ENCODE measurements at regions of chr6 and their contacts with region 1.

Region 1: GRCh38 chr6:87929843-87930288 is 117.8 kb upstream of the SPACA1 start:
- DNase-seq: peak; percentile 92

Region 2: DNA sequence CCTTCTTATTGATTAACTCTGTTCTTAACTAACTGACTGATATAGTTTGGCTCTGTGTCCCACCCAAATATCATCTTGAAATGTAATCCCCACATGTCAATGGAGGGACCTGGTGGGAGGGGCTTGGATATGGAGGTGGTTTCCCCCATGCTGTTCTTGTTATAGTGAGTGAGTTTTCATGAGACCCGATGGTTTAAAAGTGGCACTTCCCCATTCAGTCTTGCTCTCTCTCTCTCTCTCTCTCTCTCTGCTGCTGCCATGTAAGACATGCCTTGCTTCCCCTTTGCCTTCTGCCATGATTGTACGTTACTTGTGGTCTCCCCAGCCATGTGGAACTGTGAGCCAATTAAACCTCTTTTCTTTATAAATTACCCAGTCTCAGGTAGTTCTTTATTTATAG is 35.9 kb after region 1 on chr6:
- intact Hi-C with region 1: no loop called
- DNase-seq: no peak

Region 3: DNA sequence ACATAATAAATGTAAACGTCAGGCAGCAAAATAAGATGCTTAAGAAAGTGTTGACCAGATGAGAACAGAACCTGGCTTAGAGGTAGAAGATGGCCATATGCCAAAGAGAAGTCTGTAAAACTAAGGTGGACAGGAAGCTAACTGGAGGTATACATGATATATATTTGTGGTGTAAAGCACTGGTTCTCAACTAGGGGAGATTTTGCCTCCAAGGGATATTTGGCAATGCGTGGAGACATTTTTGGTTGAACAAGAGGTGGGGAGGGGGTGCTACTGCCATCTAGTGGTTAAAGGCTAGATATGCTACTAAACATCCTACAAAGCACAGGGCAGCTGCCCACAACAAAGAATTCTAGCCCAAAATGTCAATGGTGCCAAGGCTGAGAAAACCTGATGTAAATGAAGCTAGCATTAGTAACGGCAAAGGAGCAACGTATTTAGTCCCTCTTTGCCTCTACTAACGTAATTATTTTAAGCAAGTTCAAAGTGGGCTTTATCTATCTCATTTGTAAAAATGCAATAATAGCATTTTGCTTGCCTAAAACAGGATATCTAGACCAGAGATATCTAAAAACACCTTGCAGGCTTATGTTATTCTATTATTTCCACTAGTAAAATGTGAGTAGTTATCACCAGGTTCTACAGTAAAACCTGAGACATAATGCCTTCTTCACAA is 851.0 kb after region 1 on chr6:
- intact Hi-C with region 1: loop called in 1 of 2 experiments (anchors 5 kb)
- DNase-seq: no peak

Region 4: GRCh38 chr6:88870717-88871330 is 941.0 kb after region 1 on chr6:
- intact Hi-C with region 1: loop called in 1 of 2 experiments (anchors 5 kb)
- DNase-seq: no peak

Region 5: GRCh38 chr6:89190741-89191140 is 1260.9 kb after region 1 on chr6:
- intact Hi-C with region 1: loop called in 1 of 2 experiments (anchors 5 kb)
- DNase-seq: no peak

Measured in posterior vena cava (tissue), 2 donors.